HCT116 (cell line): ENCODE measurements at regions of chr19 and their contacts with region 1.

Region 1: GRCh38 chr19:4803736-4804695 is 12.5 kb downstream of the FEM1A start:
- DNase-seq: peak; percentile 41
- ATAC-seq: peak; percentile 91
- H3K4me3 ChIP-seq: no peak overlapping the region
- H3K27ac ChIP-seq: no peak overlapping the region
- H3K4me1 ChIP-seq: peaks cover 0 to 6% of the 10 kb centered on the region in 2 experiments; a peak in 1 of 4 replicates
- H3K27me3 ChIP-seq: no peaks in the 10 kb centered on the region
- CTCF ChIP-seq: peak; percentile 89 to 99 (median 90)
- POLR2A ChIP-seq: no peak
- RAD21 ChIP-seq: peak; percentile 92

Region 2: DNA sequence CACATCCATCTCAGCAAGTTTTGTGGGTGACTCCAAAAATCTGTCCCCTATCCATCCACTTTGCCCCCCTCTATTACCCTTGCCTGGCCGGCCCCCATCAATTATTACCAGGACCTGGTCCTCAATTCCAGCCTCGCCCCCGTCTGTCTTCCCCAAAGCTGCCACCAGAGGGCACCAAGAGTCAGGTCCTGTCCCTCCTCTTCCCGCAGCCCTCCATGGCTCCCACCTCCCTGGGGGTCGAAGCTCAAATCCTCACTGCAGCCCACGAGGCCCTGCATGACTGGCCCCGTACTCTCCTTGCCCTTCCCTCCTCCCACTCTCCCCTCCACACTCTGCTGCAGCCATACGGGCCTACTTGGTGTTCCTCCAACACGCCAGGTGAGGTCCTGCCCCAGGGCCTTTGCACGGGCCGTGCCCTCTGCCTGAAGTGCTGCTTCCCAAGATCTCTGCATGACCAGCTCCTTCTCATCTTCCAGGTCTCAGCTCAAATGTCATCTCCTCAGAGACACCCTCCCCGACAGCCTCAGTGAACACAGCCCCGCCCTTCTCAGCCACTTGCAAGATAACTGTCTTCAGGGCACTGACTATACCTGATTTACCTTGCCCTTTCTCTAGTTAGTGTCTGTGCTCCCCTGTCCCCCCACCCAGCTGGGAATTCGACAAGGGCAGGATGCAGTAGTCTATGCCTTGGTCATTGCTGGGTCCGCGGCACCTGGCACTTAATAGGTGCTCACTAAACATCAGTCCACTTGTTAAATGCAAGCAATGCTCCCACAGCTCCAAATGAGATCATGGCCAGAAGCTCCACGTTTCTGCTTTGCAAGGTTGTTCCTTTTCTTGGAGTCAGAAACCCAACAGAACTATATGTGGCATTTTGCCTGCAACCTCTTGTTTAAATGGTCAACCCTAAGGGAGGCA is 227.7 kb before region 1 on chr19:
- CTCF ChIA-PET with region 1: no interaction called
- POLR2A ChIA-PET with region 1: no interaction called
- RAD21 ChIA-PET with region 1: no interaction called
- intact Hi-C with region 1: loop called (anchors 10 kb)
- DNase-seq: no peak
- ATAC-seq: peak; percentile 50
- H3K4me3 ChIP-seq: peak overlapping the region in 1 of 2 experiments; percentile 55; a peak in 2 of 4 replicates
- H3K27ac ChIP-seq: peak overlapping the region; percentile 81
- H3K4me1 ChIP-seq: peaks cover 50 to 62% of the 10 kb centered on the region in 2 experiments
- H3K27me3 ChIP-seq: no peaks in the 10 kb centered on the region
- CTCF ChIP-seq: peak; percentile 62 to 95 (median 87); a peak in 5 of 6 replicates
- POLR2A ChIP-seq: no peak
- RAD21 ChIP-seq: no peak

Region 3: GRCh38 chr19:4660181-4660791 is 143.7 kb before region 1 on chr19:
- CTCF ChIA-PET with region 1: no interaction called
- POLR2A ChIA-PET with region 1: no interaction called
- RAD21 ChIA-PET with region 1: no interaction called
- intact Hi-C with region 1: no loop called
- DNase-seq: no peak
- ATAC-seq: peak; percentile 93
- H3K4me3 ChIP-seq: no peak overlapping the region
- H3K27ac ChIP-seq: no peak overlapping the region; the same call in 1 of the 2 replicates
- H3K4me1 ChIP-seq: no peaks in the 10 kb centered on the region
- H3K27me3 ChIP-seq: no peaks in the 10 kb centered on the region
- CTCF ChIP-seq: peak; percentile 60 to 69 (median 63)
- POLR2A ChIP-seq: no peak
- RAD21 ChIP-seq: no peak; the same call in none of the 2 replicates

Region 4: DNA sequence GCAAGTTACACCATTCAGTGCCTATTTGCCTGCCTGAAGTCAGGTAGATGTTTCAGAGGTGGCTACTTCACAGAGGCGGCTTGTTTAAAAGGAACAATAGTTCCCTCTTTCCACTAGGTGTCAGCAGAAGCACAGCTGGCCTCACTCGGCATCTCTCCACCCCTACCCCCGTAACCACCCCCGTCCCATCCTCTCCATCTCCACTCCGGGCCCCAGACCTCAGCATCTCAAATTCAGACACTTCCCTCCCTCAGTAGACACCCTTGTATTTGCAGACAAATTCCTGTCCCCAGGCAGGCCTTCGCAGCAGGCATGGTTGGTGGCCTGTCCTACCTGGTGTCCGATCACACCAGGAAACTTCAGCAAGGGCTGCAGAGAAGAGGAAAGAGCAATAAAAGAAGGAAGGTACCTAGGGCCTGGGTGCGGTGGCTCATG is 71.3 kb before region 1 on chr19:
- CTCF ChIA-PET with region 1: interaction called, 6 read pairs
- POLR2A ChIA-PET with region 1: no interaction called
- RAD21 ChIA-PET with region 1: no interaction called
- intact Hi-C with region 1: loop called (anchors 1 kb)
- DNase-seq: peak; percentile 58
- ATAC-seq: peak; percentile 93
- H3K4me3 ChIP-seq: peak overlapping the region in 1 of 2 experiments; percentile 40; a peak in 2 of 4 replicates
- H3K27ac ChIP-seq: no peak overlapping the region
- H3K4me1 ChIP-seq: peaks cover 2 to 8% of the 10 kb centered on the region in 2 experiments; a peak in 2 of 4 replicates
- H3K27me3 ChIP-seq: no peaks in the 10 kb centered on the region
- CTCF ChIP-seq: peak; percentile 64 to 94 (median 75)
- POLR2A ChIP-seq: no peak
- RAD21 ChIP-seq: peak; percentile 93